ENCODE measurements at regions of chr6 and their contacts with region 1.

Region 1: DNA sequence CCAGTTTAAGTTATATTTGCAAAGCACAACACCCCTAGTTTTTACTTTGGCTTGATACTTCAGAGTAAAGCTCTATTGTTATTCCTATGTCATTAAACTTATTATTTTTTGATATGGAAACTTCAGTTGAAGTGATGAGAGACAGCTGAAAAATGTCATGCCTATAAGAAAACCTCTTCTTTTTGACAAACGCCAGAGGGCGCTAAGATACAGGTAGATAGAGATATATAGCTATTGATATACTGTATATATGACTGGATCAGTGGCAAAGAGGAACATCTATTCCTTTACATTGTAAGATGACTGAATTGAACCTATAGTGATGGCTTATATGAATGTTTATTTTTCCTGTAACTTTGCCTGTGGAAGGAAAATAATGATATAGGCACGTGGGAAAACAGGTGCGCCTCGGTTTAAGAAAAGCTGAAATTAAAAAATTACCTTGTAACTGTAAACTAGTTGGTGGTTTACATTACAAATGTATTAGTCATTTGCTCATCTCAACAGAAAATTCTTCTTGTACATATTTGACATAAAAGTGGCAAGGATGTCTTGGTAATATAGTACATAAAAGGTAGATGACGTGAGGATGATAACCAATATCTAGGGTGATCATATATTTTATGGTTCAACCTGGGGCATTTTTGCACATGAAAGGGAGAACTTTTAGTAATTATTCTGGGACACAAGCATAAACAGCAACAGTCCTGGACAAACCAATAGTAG is 74.1 kb downstream of the LAMA4 start:
- DNase-seq: peak; percentile 34
- H3K4me3 Mint-ChIP-seq: no peak overlapping the region
- H3K27ac Mint-ChIP-seq: no peak overlapping the region
- H3K4me1 Mint-ChIP-seq: no peaks in the 10 kb centered on the region
- H3K27me3 Mint-ChIP-seq: peaks cover 21% of the 10 kb centered on the region

Region 2: GRCh38 chr6:112311950-112312547 is 131.8 kb after region 1 on chr6:
- intact Hi-C with region 1: loop called (anchors 1 kb)
- DNase-seq: no peak
- H3K4me3 Mint-ChIP-seq: no peak overlapping the region
- H3K27ac Mint-ChIP-seq: no peak overlapping the region
- H3K4me1 Mint-ChIP-seq: peaks cover 5% of the 10 kb centered on the region
- H3K27me3 Mint-ChIP-seq: peaks cover 11% of the 10 kb centered on the region

Region 3: GRCh38 chr6:112372226-112372806 is 192.1 kb after region 1 on chr6:
- intact Hi-C with region 1: loop called (anchors 1 kb)
- DNase-seq: no peak
- H3K4me3 Mint-ChIP-seq: no peak overlapping the region
- H3K27ac Mint-ChIP-seq: no peak overlapping the region
- H3K4me1 Mint-ChIP-seq: no peaks in the 10 kb centered on the region
- H3K27me3 Mint-ChIP-seq: peaks cover 4% of the 10 kb centered on the region

Region 4: DNA sequence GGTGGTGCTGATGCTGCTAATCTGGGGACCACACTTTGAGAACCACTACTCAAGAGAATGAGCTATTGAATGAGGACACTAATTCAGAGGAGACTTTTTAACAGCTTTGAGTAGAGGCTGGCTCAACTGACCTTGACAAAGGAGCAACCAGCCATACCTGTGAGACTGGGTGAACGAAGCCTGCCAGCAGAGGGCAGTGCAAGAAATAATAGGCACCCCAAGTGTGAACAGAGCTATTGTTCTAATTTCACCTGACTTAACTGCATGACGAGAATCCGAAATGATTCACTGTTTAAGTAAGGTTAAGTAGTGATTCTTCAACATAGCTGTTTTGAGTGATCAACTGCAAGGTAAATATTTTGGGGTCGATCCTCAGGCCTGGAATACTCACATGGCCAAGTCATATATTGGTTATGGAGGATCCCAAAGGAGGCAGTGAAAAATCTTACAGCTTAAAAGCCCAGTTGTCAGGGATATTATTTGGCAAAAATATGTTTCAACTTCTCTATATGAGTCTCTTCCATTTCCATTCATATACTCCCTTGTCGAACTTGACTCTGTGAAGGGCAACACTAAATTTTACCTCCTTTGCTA is 1126.4 kb after region 1 on chr6:
- intact Hi-C with region 1: loop called (anchors 5 kb)
- DNase-seq: peak; percentile 17
- H3K4me3 Mint-ChIP-seq: no peak overlapping the region
- H3K27ac Mint-ChIP-seq: no peak overlapping the region
- H3K4me1 Mint-ChIP-seq: no peaks in the 10 kb centered on the region
- H3K27me3 Mint-ChIP-seq: peaks cover 3% of the 10 kb centered on the region

Region 5: DNA sequence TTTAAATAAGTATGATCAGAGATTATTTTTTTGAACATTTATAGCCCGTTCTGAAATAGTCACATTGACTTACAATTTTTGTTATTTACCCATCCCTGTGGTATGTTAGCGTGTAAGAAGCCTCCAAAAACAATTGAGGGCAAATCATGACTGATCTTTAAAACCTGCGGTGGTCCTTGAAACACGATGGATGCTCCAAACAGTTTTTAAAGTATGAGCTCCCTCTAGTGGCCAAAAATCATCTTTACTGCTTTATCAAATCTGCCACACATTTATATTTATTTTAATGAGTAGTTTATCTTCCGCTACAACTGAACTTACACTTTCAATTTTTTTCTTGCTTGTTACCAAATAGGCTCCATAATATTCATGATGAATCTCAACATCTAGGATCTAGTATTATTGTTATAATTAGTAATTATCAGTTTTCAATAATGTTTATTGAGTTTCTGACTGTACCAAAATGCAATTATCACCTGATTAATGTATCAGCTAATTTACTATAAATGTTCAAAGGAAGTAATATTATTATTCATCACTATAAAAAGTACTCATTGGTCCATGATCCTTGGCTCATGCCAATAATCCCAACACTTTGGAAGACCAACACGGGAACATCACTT is 1729.1 kb after region 1 on chr6:
- intact Hi-C with region 1: loop called (anchors 1 kb)
- DNase-seq: no peak
- H3K4me3 Mint-ChIP-seq: no peak overlapping the region
- H3K27ac Mint-ChIP-seq: no peak overlapping the region
- H3K4me1 Mint-ChIP-seq: no peaks in the 10 kb centered on the region
- H3K27me3 Mint-ChIP-seq: peaks cover 9% of the 10 kb centered on the region

Measured in activated T-helper 1 cell treated with anti-CD3 and anti-CD28 coated beads, Interleukin-12 subunit alpha, Interleukin-12 subunit beta, Interleukin-2, Interleukin-4 antibody, amounts not matched to agents 30 ng/mL and 10 ng/mL and 1 ng/mL, durations not matched to agents 14 hours and 24 hours and 36 hours (primary cell).